AG04450 (cell line): ENCODE measurements at regions of chrX and their contacts with region 1.

Region 1: GRCh38 chrX:31213941-31214340 is 142.1 kb upstream of the FTHL17 start:
- DNase-seq: no peak
- H3K4me3 ChIP-seq: no peak overlapping the region
- H3K27ac ChIP-seq: no peak overlapping the region
- H3K27me3 ChIP-seq: no peaks in the 10 kb centered on the region
- CTCF ChIP-seq: peak; percentile 60

Region 2: DNA sequence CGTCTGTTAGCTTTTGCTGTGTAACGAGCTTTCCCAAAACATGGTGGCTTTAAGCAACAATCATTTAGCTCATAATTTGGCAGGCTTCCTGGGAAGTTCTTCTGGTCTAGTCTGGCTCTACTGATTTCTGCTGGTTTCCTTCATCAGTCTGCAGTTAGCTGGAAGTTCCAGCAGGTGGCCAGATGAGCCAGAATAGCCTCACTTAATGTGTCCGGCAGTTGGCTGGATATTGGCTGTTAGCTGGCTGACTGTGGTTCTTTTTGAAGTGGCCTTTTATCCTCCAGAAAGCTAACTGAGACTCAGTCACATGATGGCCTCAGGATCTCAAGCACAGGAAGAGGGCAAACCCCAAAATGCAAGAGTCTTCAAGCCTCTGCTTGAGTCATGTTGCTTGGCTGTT is 177.0 kb before region 1 on chrX:
- CTCF ChIA-PET with region 1: interaction called, 11 read pairs
- POLR2A ChIA-PET with region 1: no interaction called
- DNase-seq: peak; percentile 1
- H3K4me3 ChIP-seq: no peak overlapping the region
- H3K27ac ChIP-seq: no peak overlapping the region
- H3K27me3 ChIP-seq: no peaks in the 10 kb centered on the region
- CTCF ChIP-seq: peak; percentile 69

Region 3: DNA sequence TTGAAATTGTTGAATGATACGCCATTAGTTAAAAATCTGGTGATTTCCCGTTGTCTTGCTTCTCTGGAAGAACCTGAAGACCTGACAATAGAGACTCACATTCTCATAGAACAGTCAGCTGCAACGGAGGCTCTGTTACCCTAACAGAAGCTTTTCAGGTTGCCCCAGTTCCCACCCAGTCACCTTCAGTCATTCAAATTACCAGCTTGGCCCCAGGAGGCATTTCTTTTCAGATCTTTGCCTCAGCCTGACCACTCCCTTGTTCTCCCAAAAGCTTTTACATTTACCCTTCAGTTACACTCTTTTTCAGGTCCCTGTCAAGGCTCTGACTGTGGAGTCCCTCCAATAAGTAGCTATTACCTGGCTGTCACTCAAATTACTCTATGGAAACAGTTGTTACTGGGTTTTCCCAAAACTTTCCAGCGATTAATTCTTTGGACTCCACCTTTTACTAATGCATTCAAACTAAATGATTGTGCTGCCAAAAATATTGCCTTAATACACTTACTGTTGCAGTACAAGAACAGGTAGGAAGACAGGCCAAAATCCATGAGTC is 20.1 kb after region 1 on chrX:
- CTCF ChIA-PET with region 1: no interaction called
- POLR2A ChIA-PET with region 1: no interaction called
- DNase-seq: no peak
- H3K4me3 ChIP-seq: no peak overlapping the region
- H3K27ac ChIP-seq: no peak overlapping the region
- H3K27me3 ChIP-seq: no peaks in the 10 kb centered on the region
- CTCF ChIP-seq: no peak

Region 4: GRCh38 chrX:31423609-31424189 is 209.8 kb after region 1 on chrX:
- CTCF ChIA-PET with region 1: interaction called, 16 read pairs
- POLR2A ChIA-PET with region 1: no interaction called
- DNase-seq: no peak
- H3K4me3 ChIP-seq: 0 out of 2 replicates have a peak overlapping the region, but pooled peaks have one; percentile 13
- H3K27ac ChIP-seq: peak overlapping the region; percentile 47
- H3K27me3 ChIP-seq: no peaks in the 10 kb centered on the region
- CTCF ChIP-seq: peak; percentile 51

Region 5: DNA sequence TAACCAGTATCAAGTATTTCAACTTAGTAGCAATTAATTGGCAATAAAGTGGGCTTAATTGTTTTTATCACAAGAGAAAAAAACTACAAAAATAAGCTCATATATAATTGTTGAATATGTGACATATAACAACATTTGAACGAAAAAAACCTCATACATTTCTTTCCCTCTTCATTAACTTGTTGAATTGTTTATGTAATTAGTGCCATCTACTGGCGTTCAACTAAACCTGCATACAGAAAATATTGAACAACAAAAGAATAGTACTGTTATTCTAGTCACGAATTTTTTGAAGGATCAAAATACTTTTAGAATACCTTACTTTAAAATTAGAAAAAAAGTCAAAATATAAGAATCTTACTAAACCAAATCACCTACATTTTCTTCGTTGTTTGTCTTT is 444.4 kb after region 1 on chrX:
- CTCF ChIA-PET with region 1: interaction called, 47 read pairs
- POLR2A ChIA-PET with region 1: no interaction called
- DNase-seq: no peak
- H3K4me3 ChIP-seq: no peak overlapping the region
- H3K27ac ChIP-seq: no peak overlapping the region
- H3K27me3 ChIP-seq: no peaks in the 10 kb centered on the region
- CTCF ChIP-seq: peak; percentile 42